ENCODE measurements at regions of chr7 and their contacts with region 1.

Region 1: GRCh38 chr7:64951250-64951848 is 39.5 kb downstream of the ZNF117 start:
- DNase-seq: no peak
- H3K4me3 ChIP-seq: no peak overlapping the region
- H3K27ac ChIP-seq: no peak overlapping the region
- H3K4me1 ChIP-seq: peaks cover 7 to 11% of the 10 kb centered on the region in 2 donors
- H3K27me3 ChIP-seq: no peaks in the 10 kb centered on the region
- CTCF ChIP-seq: peak; percentile 68 to 89 (median 80)
- POLR2A ChIP-seq: no peak

Region 2: DNA sequence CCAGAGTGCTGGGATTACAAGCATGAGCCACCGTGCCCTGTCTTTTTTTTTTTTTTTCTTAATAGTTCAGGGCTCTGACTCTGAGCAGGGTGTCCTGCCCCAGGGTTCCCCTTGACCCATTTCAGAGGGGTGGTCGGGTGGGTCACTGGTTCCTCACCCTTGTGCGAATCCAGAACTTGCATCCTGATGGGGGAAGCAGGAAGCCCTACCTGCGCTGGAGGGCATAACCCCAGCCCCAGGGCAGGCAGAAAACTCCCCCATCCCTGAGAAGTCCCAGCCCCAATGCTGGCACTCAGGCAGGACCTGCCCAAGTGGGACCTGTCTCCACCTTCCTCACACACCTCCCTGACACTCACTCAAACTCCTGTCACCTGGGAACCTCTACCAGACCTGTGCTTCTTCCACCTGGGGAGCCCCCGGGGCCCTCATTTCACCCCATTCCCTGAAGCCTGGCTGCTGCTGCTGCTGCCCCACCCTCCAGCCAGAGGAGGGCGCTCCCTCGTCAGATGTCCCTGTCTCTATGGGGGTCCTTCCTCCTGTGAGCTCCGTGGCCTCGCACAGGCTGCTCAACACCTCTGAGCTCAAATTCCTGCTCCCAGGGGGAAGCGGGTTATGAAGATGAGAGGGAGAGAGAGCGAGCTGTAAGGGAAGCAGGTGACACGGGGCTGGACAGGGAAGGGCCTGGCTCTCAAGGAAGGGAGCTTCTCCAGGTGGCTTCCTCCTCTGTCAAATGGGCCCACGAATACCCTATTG is 63.4 kb before region 1 on chr7:
- intact Hi-C with region 1: no loop called
- DNase-seq: peak; percentile 31 to 43
- H3K4me3 ChIP-seq: peak overlapping the region in 2 of 3 donors; percentile 24 to 31
- H3K27ac ChIP-seq: no peak overlapping the region
- H3K4me1 ChIP-seq: peaks cover 22 to 34% of the 10 kb centered on the region in 2 donors
- H3K27me3 ChIP-seq: no peaks in the 10 kb centered on the region
- CTCF ChIP-seq: peak in 5 of 6 experiments; percentile 15 to 47 (median 21)
- POLR2A ChIP-seq: no peak

Region 3: GRCh38 chr7:65216459-65216858 is 265.1 kb after region 1 on chr7:
- intact Hi-C with region 1: loop called (anchors 5 kb)
- DNase-seq: peak; percentile 74 to 81
- H3K4me3 ChIP-seq: no peak overlapping the region
- H3K27ac ChIP-seq: no peak overlapping the region
- H3K4me1 ChIP-seq: no peaks in the 10 kb centered on the region
- H3K27me3 ChIP-seq: no peaks in the 10 kb centered on the region
- CTCF ChIP-seq: peak; percentile 43 to 89 (median 60)
- POLR2A ChIP-seq: no peak

Measured in thyroid gland (tissue), 4 donors.